ENCODE measurements at regions of chr10 and their contacts with region 1.

Region 1: DNA sequence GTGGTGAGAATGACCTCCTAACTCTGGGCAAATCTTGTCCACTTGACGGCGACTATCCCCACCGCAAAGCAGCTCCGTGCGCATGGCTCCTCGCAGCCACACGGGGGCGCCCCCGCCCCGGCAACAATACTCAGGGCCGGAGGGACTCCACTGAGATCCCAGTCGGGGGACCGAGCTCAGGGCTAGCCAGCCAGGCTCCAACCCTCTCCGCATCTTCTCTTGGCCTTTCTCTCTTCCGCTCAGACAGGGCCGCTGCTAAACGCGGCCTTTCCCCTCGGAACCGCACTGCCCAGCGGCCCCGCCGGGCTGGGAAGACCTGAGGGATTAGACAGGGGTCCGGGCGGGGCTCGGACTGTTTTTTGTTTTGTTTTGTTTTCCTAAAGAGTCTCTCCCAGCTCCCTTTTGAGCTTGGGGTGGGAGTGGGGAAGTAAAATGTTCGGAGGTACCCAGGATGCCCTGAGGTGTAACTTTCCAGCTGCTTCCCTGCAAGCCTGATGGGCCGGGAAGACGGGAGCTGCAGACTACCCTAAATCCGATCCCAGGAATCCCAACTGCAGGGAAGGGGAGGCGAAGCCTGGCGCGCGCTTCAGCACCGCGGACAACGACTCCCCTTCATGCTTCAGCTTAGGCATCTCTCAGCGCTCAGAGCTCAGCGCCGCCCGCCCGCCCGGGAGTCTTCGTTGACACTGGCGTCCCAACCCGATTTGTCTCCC is 2.7 kb downstream of the KCNIP2 start:
- DNase-seq: peak; percentile 84
- H3K4me3 Mint-ChIP-seq: peak overlapping the region; percentile 76
- H3K27ac Mint-ChIP-seq: no peak overlapping the region
- H3K4me1 Mint-ChIP-seq: peaks cover 41% of the 10 kb centered on the region
- H3K27me3 Mint-ChIP-seq: peaks cover 14% of the 10 kb centered on the region

Region 2: DNA sequence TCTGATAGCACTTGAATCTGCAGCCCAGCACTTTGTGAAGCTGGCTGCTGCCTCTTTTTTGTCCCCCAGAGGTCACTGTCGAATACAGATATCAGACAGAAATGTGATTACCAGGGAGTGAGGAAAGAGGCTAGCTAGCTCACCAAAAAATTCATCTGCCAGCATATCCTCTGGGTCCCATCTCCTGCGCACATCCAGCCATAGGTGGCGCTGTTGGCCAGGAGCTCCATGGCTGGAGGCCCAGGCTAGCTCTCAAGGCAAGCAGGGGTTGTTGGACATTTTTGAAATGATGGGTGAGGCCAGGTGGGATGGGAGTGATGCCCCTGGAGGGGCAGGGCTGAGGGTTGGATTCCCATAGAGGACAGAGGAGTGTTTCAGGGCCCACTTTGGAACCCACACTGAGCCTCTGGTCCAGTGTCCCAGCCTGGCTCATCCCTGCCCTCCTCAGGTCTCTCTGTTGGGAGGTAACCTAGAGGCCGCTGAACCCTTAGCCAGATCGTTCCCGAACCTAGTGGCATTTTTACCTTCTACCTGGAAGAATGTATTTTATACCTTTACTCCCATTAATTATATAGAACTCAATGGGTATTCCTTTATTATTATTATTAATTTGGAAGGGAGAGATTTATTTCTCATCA is 238.0 kb before region 1 on chr10:
- CTCF ChIA-PET with region 1: interaction called, 5 read pairs
- intact Hi-C with region 1: loop called (anchors 1 kb)
- DNase-seq: peak; percentile 90
- H3K4me3 Mint-ChIP-seq: no peak overlapping the region
- H3K27ac Mint-ChIP-seq: no peak overlapping the region
- H3K4me1 Mint-ChIP-seq: no peaks in the 10 kb centered on the region
- H3K27me3 Mint-ChIP-seq: no peaks in the 10 kb centered on the region

Region 3: DNA sequence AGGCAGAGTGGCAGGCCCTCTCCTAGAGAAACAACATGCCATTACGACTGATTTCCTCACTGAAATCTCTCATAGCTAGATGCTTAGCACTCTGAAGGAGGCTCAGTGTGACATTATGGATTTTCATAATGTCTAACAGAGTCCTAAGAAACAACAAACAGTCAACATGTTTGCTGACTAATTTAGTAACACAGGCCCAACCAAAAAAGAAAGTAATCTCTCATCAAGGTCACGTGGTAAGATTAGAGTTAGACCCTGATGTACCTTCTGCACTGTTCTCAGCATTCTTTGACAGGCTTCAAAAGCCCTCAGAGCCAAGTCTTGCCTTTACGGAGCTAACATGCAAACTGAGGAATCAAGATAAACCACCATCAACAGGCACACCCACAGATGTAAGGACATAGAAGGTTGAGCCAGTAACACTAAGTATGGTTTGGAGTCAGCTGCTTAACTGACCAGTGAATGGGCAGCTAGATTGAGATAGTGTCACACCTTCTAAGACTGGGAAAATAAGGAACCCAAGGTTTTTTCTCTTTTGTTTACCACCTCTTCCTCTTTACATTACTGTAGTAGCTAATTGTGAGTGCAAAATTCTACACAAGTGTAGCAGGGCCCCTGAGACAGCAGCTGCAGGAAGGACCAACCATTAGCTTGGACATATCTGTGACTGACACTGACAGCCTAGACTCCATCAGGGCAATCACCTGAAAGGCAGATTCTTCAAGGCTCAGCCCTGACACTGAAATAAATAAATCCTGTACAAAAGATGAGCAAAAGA is 18.0 kb after region 1 on chr10:
- CTCF ChIA-PET with region 1: interaction called, 23 read pairs
- intact Hi-C with region 1: no loop called
- DNase-seq: no peak
- H3K4me3 Mint-ChIP-seq: no peak overlapping the region
- H3K27ac Mint-ChIP-seq: no peak overlapping the region
- H3K4me1 Mint-ChIP-seq: no peaks in the 10 kb centered on the region
- H3K27me3 Mint-ChIP-seq: no peaks in the 10 kb centered on the region

Region 4: DNA sequence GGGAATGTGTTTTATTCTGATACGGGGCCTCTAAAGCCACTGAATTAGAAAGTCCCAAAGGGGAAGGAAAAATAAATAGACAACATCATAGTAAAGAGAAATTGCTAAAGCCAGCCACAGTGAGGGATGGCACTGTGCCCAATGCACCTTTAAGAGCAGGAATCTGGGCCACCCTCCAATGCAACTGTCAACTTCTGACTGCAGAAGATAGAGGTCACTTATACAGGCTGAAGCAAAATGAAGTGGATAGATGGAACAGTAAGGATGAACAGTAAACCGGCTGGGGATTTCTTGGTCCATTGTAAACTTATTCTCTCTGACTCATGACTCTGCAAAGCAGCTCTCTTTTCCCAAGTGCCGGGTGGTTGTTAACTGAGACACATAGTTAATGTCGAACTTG is 56.7 kb after region 1 on chr10:
- CTCF ChIA-PET with region 1: interaction called, 11 read pairs
- intact Hi-C with region 1: no loop called
- DNase-seq: no peak
- H3K4me3 Mint-ChIP-seq: no peak overlapping the region
- H3K27ac Mint-ChIP-seq: no peak overlapping the region
- H3K4me1 Mint-ChIP-seq: peaks cover 13% of the 10 kb centered on the region
- H3K27me3 Mint-ChIP-seq: no peaks in the 10 kb centered on the region

Region 5: DNA sequence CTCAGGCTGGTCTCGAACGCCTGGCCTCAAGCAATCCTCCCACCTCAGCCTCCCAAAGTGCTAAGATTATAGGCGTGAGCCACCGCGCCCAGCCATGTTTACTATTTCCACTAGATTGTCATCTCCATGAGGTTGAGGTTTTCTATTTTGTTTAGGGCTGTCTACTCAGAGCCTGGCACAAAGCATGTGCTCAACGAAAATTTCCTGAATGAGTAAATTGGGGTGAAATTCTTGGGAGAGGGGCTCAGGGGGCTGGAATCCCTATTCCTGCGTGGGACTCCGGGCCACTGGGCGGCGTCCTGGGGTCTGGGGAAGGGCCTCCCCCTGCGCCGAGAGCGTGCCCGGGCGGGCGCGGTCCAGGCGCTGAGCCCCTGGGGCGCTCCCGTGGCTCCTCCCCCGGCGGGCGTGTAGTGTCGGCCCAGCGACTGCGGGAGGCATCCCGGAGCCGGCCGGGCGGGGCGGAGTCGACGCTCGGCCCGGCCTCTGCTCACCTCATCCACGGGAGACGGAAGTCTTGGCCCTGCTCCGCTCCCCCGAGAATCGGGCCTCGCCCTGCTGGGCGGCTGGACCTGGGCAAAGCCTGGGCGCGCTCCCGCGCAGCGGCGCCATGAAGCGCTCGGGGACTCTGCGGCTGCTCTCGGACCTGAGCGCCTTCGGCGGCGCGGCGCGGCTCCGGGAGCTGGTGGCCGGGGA is 224.1 kb after region 1 on chr10 and contains the start of gene HPS6:
- CTCF ChIA-PET with region 1: interaction called, 23 read pairs
- intact Hi-C with region 1: no loop called
- DNase-seq: peak; percentile 91
- H3K4me3 Mint-ChIP-seq: peak within 1 kb of the TSS; percentile 83
- H3K27ac Mint-ChIP-seq: peak within 1 kb of the TSS; percentile 88
- H3K4me1 Mint-ChIP-seq: peaks cover 24% of the 10 kb centered on the region
- H3K27me3 Mint-ChIP-seq: no peaks in the 10 kb centered on the region
- total RNA-seq, gene HPS6: 8.7 to 8.8 TPM

Region 6: GRCh38 chr10:102114861-102115618 is 274.1 kb after region 1 on chr10:
- CTCF ChIA-PET with region 1: interaction called, 4 read pairs
- intact Hi-C with region 1: loop called (anchors 2 kb)
- DNase-seq: peak; percentile 92
- H3K4me3 Mint-ChIP-seq: peak overlapping the region; percentile 93
- H3K27ac Mint-ChIP-seq: peak overlapping the region; percentile 98
- H3K4me1 Mint-ChIP-seq: peaks cover 53% of the 10 kb centered on the region
- H3K27me3 Mint-ChIP-seq: no peaks in the 10 kb centered on the region

Measured in activated naive CD4-positive, alpha-beta T cell treated with anti-CD3 and anti-CD28 coated beads for 36 hours (primary cell).